T-cell (primary cell): ENCODE measurements at regions of chr6 and their contacts with region 1.

Region 1: DNA sequence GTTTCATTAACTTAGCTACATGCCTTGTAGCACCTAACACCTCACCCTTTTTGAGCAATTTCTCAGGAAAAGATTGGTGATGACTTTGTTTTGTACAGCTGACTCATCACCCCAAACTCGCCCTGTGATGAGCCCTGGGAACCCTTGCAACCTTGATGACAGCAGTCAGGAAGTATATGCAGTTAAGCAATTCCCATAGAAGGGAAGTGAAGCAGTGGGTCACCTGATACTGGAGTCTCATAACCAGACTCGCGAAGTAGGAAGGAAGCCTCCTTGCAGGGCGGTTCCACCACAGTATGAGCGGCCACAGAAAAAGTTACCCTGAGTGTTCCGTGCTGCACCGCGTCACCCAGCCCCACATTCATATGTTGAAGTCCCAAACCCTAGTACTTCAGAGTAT is 82.0 kb upstream of the EDN1 start:
- DNase-seq: peak in 3 of 35 experiments; percentile 3 to 29 (median 9)
- ATAC-seq: no peak
- H3K4me3 ChIP-seq: no peak overlapping the region
- H3K4me3 Mint-ChIP-seq: no peak overlapping the region
- H3K27ac ChIP-seq: no peak overlapping the region
- H3K27ac Mint-ChIP-seq: no peak overlapping the region
- H3K4me1 ChIP-seq: no peaks in the 10 kb centered on the region
- H3K4me1 Mint-ChIP-seq: no peaks in the 10 kb centered on the region
- H3K27me3 ChIP-seq: no peaks in the 10 kb centered on the region
- H3K27me3 Mint-ChIP-seq: peaks cover 0 to 5% of the 10 kb centered on the region in 2 donors

Region 2: GRCh38 chr6:12222405-12223366 is 14.5 kb after region 1 on chr6:
- CTCF ChIA-PET with region 1: no interaction called
- POLR2A ChIA-PET with region 1: no interaction called
- DNase-seq: no peak
- ATAC-seq: no peak
- H3K4me3 ChIP-seq: no peak overlapping the region
- H3K4me3 Mint-ChIP-seq: no peak overlapping the region
- H3K27ac ChIP-seq: no peak overlapping the region
- H3K27ac Mint-ChIP-seq: no peak overlapping the region
- H3K4me1 ChIP-seq: no peaks in the 10 kb centered on the region
- H3K4me1 Mint-ChIP-seq: no peaks in the 10 kb centered on the region
- H3K27me3 ChIP-seq: peaks cover 0 to 9% of the 10 kb centered on the region in 2 experiments
- H3K27me3 Mint-ChIP-seq: no peaks in the 10 kb centered on the region

Region 3: DNA sequence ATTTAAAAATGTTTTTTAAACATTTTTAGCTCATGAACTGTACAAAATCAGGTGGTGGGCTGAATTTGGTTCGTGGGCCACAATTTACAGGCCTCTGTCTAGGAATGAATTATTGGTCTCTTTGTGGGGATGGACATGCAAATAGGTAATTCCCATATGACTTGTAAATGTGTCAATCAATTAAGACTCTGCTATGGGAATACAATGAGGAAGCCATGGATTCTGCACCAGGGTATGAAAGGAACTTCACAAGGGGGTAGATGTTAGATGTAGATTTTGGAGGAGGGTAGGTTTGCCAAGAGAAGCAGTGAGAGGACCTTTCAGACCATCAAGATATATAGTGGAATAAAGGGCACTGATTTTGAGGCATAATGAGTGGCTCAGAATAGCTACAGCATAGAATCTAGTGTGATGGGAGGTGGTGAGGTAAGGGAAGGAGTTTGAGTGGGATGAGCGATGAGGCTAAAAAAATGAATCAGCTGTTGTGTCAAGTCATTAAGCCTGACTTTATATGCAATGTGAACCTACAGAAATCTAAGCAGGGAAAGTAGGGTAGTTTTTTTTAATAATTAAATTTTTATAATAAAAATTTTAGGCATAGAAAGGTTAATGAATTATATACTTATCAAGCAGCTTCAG is 1683.9 kb after region 1 on chr6:
- CTCF ChIA-PET with region 1: no interaction called
- POLR2A ChIA-PET with region 1: interaction called in 1 of 2 experiments, 15 read pairs
- DNase-seq: no peak
- ATAC-seq: no peak
- H3K4me3 ChIP-seq: no peak overlapping the region
- H3K4me3 Mint-ChIP-seq: no peak overlapping the region
- H3K27ac ChIP-seq: no peak overlapping the region
- H3K27ac Mint-ChIP-seq: no peak overlapping the region
- H3K4me1 ChIP-seq: no peaks in the 10 kb centered on the region
- H3K4me1 Mint-ChIP-seq: no peaks in the 10 kb centered on the region
- H3K27me3 ChIP-seq: no peaks in the 10 kb centered on the region
- H3K27me3 Mint-ChIP-seq: peaks cover 5 to 11% of the 10 kb centered on the region in 2 donors